ENCODE measurements at regions of chr2 and their contacts with region 1.

Region 1: DNA sequence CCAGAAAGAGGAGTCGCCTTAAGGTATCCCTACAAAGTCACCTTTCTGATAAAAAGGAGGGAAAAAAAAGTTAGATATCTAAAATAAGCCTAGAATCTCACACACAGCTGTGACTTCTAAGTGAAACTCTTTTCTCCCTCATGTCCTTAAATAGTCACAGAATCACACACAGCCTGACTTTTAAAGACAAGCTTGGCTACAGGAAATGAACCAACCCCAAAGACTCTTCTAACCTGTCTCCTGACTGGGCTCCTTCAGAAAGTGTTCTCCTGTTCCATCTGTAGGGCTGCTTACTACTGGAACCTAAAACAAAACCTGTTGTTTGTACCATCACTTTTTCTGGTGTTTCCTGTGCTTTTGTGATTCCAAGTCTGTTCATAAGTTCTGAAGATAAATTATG is 62.7 kb upstream of the NRP2 start:
- DNase-seq: no peak
- ATAC-seq: no peak
- H3K4me3 Mint-ChIP-seq: no peak overlapping the region
- H3K27ac Mint-ChIP-seq: no peak overlapping the region
- H3K4me1 Mint-ChIP-seq: no peaks in the 10 kb centered on the region
- H3K27me3 Mint-ChIP-seq: no peaks in the 10 kb centered on the region; the same call in none of the 2 replicates
- CTCF ChIP-seq: no peak

Region 2: GRCh38 chr2:205651719-205652118 is 32.1 kb after region 1 on chr2:
- CTCF ChIA-PET with region 1: no interaction called
- POLR2A ChIA-PET with region 1: interaction called, 11 read pairs
- DNase-seq: no peak
- ATAC-seq: no peak
- H3K4me3 Mint-ChIP-seq: no peak overlapping the region
- H3K27ac Mint-ChIP-seq: no peak overlapping the region
- H3K4me1 Mint-ChIP-seq: peaks cover 31% of the 10 kb centered on the region
- H3K27me3 Mint-ChIP-seq: peaks cover 3% of the 10 kb centered on the region
- CTCF ChIP-seq: no peak